ENCODE measurements at regions of chr7 and their contacts with region 1.

Region 1: DNA sequence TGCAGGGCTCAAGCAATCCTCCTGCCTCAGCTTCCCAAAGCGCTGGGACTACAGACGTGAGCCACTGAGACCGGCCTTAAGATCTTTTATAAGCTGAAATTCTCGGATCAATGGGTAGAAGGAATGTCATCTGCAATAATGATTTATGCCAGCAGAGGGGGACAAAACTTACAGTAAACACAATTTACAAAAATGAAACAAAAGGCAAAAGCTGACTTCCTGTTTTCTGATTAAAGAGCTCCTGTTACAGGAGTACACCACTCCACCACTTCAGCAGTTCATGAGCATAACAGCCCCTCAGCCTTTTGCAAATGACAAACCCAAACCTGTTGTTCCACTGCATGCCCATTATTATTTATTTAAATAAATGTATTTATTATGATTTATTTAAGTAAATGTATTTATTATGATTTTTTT is 88.5 kb upstream of the ATP6V0A4 start:
- DNase-seq: peak; percentile 52
- H3K4me3 Mint-ChIP-seq: no peak overlapping the region
- H3K27ac Mint-ChIP-seq: peak overlapping the region; percentile 69
- H3K4me1 Mint-ChIP-seq: peaks cover 13% of the 10 kb centered on the region
- H3K27me3 Mint-ChIP-seq: no peaks in the 10 kb centered on the region

Region 2: GRCh38 chr7:138898255-138898654 is 11.7 kb after region 1 on chr7:
- CTCF ChIA-PET with region 1: interaction called, 45 read pairs
- intact Hi-C with region 1: loop called (anchors 1 kb)
- DNase-seq: peak; percentile 54
- H3K4me3 Mint-ChIP-seq: no peak overlapping the region
- H3K27ac Mint-ChIP-seq: peak overlapping the region; percentile 75
- H3K4me1 Mint-ChIP-seq: peaks cover 43% of the 10 kb centered on the region
- H3K27me3 Mint-ChIP-seq: no peaks in the 10 kb centered on the region

Region 3: GRCh38 chr7:139016931-139017511 is 130.5 kb after region 1 on chr7:
- CTCF ChIA-PET with region 1: interaction called, 8 read pairs
- intact Hi-C with region 1: loop called (anchors 1 kb)
- DNase-seq: peak; percentile 80
- H3K4me3 Mint-ChIP-seq: no peak overlapping the region
- H3K27ac Mint-ChIP-seq: no peak overlapping the region
- H3K4me1 Mint-ChIP-seq: peaks cover 4% of the 10 kb centered on the region
- H3K27me3 Mint-ChIP-seq: no peaks in the 10 kb centered on the region

Region 4: GRCh38 chr7:139118234-139118804 is 231.8 kb after region 1 on chr7:
- CTCF ChIA-PET with region 1: no interaction called
- intact Hi-C with region 1: loop called (anchors 2 kb)
- DNase-seq: peak; percentile 76
- H3K4me3 Mint-ChIP-seq: peak overlapping the region; percentile 46
- H3K27ac Mint-ChIP-seq: peak overlapping the region; percentile 17
- H3K4me1 Mint-ChIP-seq: peaks cover 52% of the 10 kb centered on the region
- H3K27me3 Mint-ChIP-seq: no peaks in the 10 kb centered on the region

Region 5: GRCh38 chr7:139359366-139360209 is 473.1 kb after region 1 on chr7 and contains the start of gene LUC7L2:
- CTCF ChIA-PET with region 1: no interaction called
- intact Hi-C with region 1: loop called (anchors 5 kb)
- DNase-seq: peak; percentile 100
- H3K4me3 Mint-ChIP-seq: peak within 1 kb of the TSS; percentile 93
- H3K27ac Mint-ChIP-seq: peak within 1 kb of the TSS; percentile 98
- H3K4me1 Mint-ChIP-seq: peaks cover 33% of the 10 kb centered on the region
- H3K27me3 Mint-ChIP-seq: no peaks in the 10 kb centered on the region
- total RNA-seq, gene LUC7L2: 132 to 138 TPM